PC-9 (cell line): ENCODE measurements at regions of chr4 and their contacts with region 1.

Region 1: GRCh38 chr4:124144238-124144654 is 568.3 kb downstream of the ANKRD50 start:
- DNase-seq: no peak
- H3K4me3 ChIP-seq: no peak overlapping the region
- H3K27ac ChIP-seq: no peak overlapping the region
- H3K4me1 ChIP-seq: no peaks in the 10 kb centered on the region
- H3K27me3 ChIP-seq: no peaks in the 10 kb centered on the region
- CTCF ChIP-seq: no peak

Region 2: GRCh38 chr4:123102897-123103471 is 1041.3 kb before region 1 on chr4:
- CTCF ChIA-PET with region 1: interaction called, 11 read pairs
- POLR2A ChIA-PET with region 1: no interaction called
- intact Hi-C with region 1: no loop called
- DNase-seq: peak in 1 of 2 experiments; percentile 38
- H3K4me3 ChIP-seq: no peak overlapping the region
- H3K27ac ChIP-seq: no peak overlapping the region
- H3K4me1 ChIP-seq: no peaks in the 10 kb centered on the region
- H3K27me3 ChIP-seq: no peaks in the 10 kb centered on the region
- CTCF ChIP-seq: peak; percentile 92